Activated CD4-positive, alpha-beta memory T cell treated with anti-CD3 and anti-CD28 coated beads, Interleukin-2, amount 10 ng/mL, durations not matched to agents 7 days and 5 days (primary cell): ENCODE measurements at regions of chr11 and their contacts with region 1.

Region 1: GRCh38 chr11:65637794-65638317 is at the start of gene SIPA1:
- DNase-seq: peak; percentile 69
- H3K4me3 Mint-ChIP-seq: peak within 1 kb of the TSS; percentile 95
- H3K27ac Mint-ChIP-seq: peak within 1 kb of the TSS; percentile 97
- H3K4me1 Mint-ChIP-seq: peaks cover 64% of the 10 kb centered on the region
- H3K27me3 Mint-ChIP-seq: no peaks in the 10 kb centered on the region
- total RNA-seq, gene SIPA1: 201 to 205 TPM

Region 2: GRCh38 chr11:65652511-65653231 is 14.8 kb after region 1 on chr11:
- CTCF ChIA-PET with region 1: interaction called, 3 read pairs
- POLR2A ChIA-PET with region 1: interaction called, 187 read pairs
- DNase-seq: peak; percentile 96
- H3K4me3 Mint-ChIP-seq: peak overlapping the region; percentile 74
- H3K27ac Mint-ChIP-seq: peak overlapping the region; percentile 93
- H3K4me1 Mint-ChIP-seq: peaks cover 50% of the 10 kb centered on the region
- H3K27me3 Mint-ChIP-seq: no peaks in the 10 kb centered on the region

Region 3: DNA sequence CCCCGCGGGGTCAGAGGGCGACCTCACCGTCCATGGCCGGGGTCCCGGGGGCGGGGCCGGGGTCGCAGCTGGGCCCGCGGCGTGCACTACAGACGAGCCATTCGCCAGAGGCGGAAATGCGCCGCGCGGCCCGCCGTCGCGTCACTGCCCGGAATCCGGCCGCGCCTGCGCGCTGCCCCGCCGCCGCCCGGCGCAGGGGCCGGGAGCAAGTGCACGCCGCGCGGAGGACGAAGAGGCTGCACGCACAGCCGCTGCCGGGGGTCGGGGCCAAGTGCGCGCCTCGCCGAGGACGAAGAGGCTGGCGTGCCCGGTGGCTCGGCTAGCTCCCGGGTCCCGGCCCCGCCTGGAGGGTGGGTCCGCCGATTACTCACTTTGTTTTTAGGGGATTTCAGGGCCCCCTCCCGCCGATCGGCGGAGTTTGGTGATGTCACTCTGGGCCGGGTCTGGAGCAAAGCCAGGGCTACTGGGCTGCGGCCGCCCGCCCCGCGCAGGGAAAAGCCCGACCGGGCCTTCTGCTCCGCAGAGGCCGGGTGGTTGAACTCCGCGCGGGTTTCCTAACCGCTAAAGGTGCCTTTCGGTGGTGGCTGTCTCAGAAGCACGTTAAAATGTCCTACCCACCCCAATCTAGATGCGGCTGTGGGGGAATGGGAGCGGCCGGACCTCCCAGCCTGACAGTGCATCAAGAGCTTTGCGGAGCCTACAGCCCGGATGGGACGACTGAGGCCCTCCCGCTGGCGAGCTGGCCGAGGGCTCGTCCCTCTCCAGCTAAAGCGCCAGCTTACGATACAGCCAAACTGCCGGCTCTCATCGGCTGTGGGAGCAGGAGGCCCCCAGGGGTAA is 25.2 kb after region 1 on chr11 and contains the start of gene RELA:
- CTCF ChIA-PET with region 1: interaction called, 6 read pairs
- POLR2A ChIA-PET with region 1: interaction called, 30 read pairs
- DNase-seq: peak; percentile 91
- H3K4me3 Mint-ChIP-seq: peak within 1 kb of the TSS; percentile 89
- H3K27ac Mint-ChIP-seq: peak within 1 kb of the TSS; percentile 93
- H3K4me1 Mint-ChIP-seq: peaks cover 37% of the 10 kb centered on the region
- H3K27me3 Mint-ChIP-seq: no peaks in the 10 kb centered on the region
- total RNA-seq, gene RELA: 91.2 to 102 TPM

Region 4: GRCh38 chr11:65685981-65686380 is 48.1 kb after region 1 on chr11:
- CTCF ChIA-PET with region 1: no interaction called
- POLR2A ChIA-PET with region 1: no interaction called
- DNase-seq: no peak
- H3K4me3 Mint-ChIP-seq: no peak overlapping the region
- H3K27ac Mint-ChIP-seq: no peak overlapping the region
- H3K4me1 Mint-ChIP-seq: no peaks in the 10 kb centered on the region
- H3K27me3 Mint-ChIP-seq: peaks cover 20% of the 10 kb centered on the region

Region 5: GRCh38 chr11:65730484-65730883 is 92.6 kb after region 1 on chr11:
- CTCF ChIA-PET with region 1: no interaction called
- POLR2A ChIA-PET with region 1: no interaction called
- DNase-seq: no peak
- H3K4me3 Mint-ChIP-seq: no peak overlapping the region
- H3K27ac Mint-ChIP-seq: no peak overlapping the region
- H3K4me1 Mint-ChIP-seq: no peaks in the 10 kb centered on the region
- H3K27me3 Mint-ChIP-seq: peaks cover 18% of the 10 kb centered on the region